ENCODE measurements at regions of chr1 and their contacts with region 1.

Region 1: DNA sequence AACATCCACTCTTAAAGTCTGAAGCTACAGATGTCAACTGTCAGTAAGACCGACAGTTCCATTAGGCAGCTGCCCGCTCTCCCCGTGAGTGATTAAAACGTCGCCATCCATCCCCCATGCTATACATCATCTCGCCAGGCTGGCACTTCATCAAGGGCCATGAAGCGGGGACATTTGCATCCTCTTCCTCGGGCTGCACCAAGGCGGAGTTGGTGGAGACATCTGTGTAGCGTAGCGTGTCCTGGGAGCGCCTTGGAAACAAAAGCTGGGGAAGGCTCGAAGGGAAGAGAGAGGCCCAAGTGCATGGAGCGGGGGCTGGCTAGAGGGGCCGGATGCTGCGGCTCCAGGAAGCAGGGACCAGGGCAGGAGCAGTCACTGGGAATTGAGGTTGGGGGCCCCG is 250.1 kb downstream of the KAZN start:
- DNase-seq: no peak
- H3K4me3 ChIP-seq: no peak overlapping the region
- H3K27ac ChIP-seq: no peak overlapping the region
- H3K4me1 ChIP-seq: no peaks in the 10 kb centered on the region; a peak in 1 of 7 replicates
- H3K27me3 ChIP-seq: no peaks in the 10 kb centered on the region
- CTCF ChIP-seq: no peak
- EP300 ChIP-seq: no peak
- POLR2A ChIP-seq: no peak
- RAD21 ChIP-seq: no peak

Region 2: DNA sequence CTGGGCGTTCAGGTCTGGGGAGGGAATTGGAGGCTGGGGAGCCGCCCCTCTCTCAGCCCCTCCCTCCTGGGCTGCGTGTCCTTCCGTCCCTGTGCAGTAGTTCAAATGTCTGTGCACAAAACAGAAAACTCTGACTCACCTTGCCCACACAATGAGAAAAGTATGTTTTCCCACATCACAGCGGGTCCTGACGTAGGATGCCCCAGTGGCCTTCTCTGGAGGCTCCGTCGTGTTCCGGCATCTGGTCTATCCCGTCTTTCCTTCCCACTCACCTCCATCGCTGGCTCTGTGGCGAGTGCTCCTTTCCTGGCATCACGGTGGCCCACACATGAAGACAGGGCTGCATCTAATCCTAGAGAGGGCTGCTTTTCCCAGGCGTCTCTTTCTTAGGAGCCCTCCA is 26.1 kb before region 1 on chr1:
- CTCF ChIA-PET with region 1: no interaction called
- POLR2A ChIA-PET with region 1: no interaction called
- DNase-seq: no peak
- H3K4me3 ChIP-seq: no peak overlapping the region
- H3K27ac ChIP-seq: no peak overlapping the region
- H3K4me1 ChIP-seq: no peaks in the 10 kb centered on the region
- H3K27me3 ChIP-seq: no peaks in the 10 kb centered on the region
- CTCF ChIP-seq: no peak
- EP300 ChIP-seq: no peak
- POLR2A ChIP-seq: no peak
- RAD21 ChIP-seq: no peak

Region 3: GRCh38 chr1:14835725-14836124 is 12.9 kb before region 1 on chr1:
- CTCF ChIA-PET with region 1: interaction called, 11 read pairs
- POLR2A ChIA-PET with region 1: no interaction called
- DNase-seq: no peak
- H3K4me3 ChIP-seq: no peak overlapping the region
- H3K27ac ChIP-seq: no peak overlapping the region
- H3K4me1 ChIP-seq: peaks cover 0 to 5% (median 0%) of the 10 kb centered on the region in 4 experiments; a peak in 1 of 7 replicates
- H3K27me3 ChIP-seq: no peaks in the 10 kb centered on the region
- CTCF ChIP-seq: no peak
- EP300 ChIP-seq: no peak
- POLR2A ChIP-seq: no peak
- RAD21 ChIP-seq: no peak

Measured in H1 (cell line).